Activated CD8-positive, alpha-beta T cell treated with anti-CD3 and anti-CD28 coated beads for 36 hours (primary cell): ENCODE measurements at regions of chr7 and their contacts with region 1.

Region 1: DNA sequence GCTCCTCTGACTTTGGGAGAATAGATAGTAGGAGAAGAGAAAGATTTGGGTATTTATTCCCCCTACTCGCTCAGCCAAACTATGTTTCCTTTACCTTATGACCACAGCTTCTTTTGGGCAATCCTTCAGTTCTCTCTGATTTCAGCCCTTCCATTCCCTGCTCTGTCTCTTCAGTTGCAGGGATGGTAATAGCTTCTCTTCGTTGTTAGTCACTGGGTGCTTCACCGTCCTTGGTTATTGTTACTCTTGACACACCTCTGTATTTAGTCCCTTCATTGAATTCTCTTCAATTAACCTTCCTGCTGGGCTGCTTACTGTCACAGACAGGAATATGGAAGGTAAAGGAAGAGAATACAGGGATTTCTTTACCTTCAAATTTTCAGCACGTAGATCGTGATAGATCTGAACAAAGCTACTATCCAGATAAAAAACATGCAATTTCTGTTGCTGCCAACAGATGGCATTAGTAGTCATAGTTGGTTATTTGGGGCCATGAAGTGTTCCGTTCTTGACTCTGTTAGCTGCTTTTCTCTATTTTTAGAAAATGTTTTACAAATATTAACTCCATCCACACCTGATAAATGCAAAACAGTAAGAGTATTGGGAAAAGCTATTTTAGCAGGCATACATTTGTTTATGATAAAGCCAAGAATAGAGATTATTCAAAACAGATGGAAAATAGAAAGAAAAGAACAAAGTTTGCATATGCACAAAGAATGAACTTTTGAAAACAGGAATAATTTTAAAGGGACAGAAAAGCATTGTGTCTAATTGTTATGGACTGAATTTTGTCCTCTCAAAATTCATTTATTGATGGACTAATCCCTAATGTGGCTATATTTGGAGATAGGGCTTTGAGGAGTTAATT is 14.0 kb upstream of the PTTG1IP2 start:
- DNase-seq: peak; percentile 8
- ATAC-seq: peak; percentile 72
- H3K4me3 Mint-ChIP-seq: no peak overlapping the region
- H3K27ac Mint-ChIP-seq: no peak overlapping the region
- H3K4me1 Mint-ChIP-seq: peaks cover 5% of the 10 kb centered on the region
- H3K27me3 Mint-ChIP-seq: peaks cover 5% of the 10 kb centered on the region
- CTCF ChIP-seq: peak; percentile 83

Region 2: GRCh38 chr7:90629297-90629918 is 174.0 kb after region 1 on chr7:
- CTCF ChIA-PET with region 1: interaction called, 20 read pairs
- POLR2A ChIA-PET with region 1: no interaction called
- intact Hi-C with region 1: loop called (anchors 1 kb)
- DNase-seq: peak; percentile 15
- ATAC-seq: peak; percentile 55
- H3K4me3 Mint-ChIP-seq: no peak overlapping the region
- H3K27ac Mint-ChIP-seq: no peak overlapping the region
- H3K4me1 Mint-ChIP-seq: no peaks in the 10 kb centered on the region
- H3K27me3 Mint-ChIP-seq: peaks cover 2% of the 10 kb centered on the region
- CTCF ChIP-seq: peak; percentile 56

Region 3: DNA sequence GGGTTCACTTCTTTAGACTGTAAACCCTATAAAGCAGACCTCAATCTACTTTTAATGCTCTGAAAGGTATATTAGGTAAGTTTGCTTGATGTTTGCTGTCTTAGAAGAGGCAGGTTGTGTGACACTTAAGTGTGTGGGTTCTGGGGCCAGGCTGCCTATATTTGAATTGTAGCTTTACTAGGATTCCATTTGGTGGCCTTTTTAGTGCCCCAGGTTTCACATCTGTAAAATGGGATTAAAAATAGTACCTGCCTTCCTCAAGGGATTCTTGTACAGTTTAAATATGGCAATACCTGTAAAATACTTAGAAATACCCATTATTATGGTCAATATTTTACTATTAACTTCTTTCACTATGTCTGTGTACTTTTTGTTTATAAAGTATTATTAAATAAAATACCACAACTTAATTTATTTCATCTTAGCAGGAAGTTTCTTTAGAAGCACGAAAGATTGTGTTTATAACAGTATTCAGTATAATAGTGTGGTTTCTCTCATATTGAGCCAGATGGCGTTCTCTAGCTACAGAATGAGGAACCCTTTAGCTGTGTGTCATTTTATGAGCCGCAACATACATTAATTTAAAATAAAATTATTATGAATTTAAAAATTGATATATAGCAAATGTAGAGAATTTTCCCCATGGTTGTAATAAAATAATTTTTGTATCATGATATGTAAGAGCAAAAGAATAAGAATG is 234.9 kb after region 1 on chr7:
- CTCF ChIA-PET with region 1: no interaction called
- POLR2A ChIA-PET with region 1: no interaction called
- intact Hi-C with region 1: no loop called
- DNase-seq: no peak
- ATAC-seq: no peak
- H3K4me3 Mint-ChIP-seq: no peak overlapping the region
- H3K27ac Mint-ChIP-seq: no peak overlapping the region
- H3K4me1 Mint-ChIP-seq: no peaks in the 10 kb centered on the region
- H3K27me3 Mint-ChIP-seq: peaks cover under 1% of the 10 kb centered on the region
- CTCF ChIP-seq: no peak

Region 4: GRCh38 chr7:91034459-91035368 is 579.3 kb after region 1 on chr7:
- CTCF ChIA-PET with region 1: interaction called, 5 read pairs
- POLR2A ChIA-PET with region 1: no interaction called
- intact Hi-C with region 1: loop called (anchors 10 kb)
- DNase-seq: peak; percentile 53
- ATAC-seq: no peak
- H3K4me3 Mint-ChIP-seq: no peak overlapping the region
- H3K27ac Mint-ChIP-seq: no peak overlapping the region
- H3K4me1 Mint-ChIP-seq: no peaks in the 10 kb centered on the region
- H3K27me3 Mint-ChIP-seq: no peaks in the 10 kb centered on the region
- CTCF ChIP-seq: peak; percentile 56